CD8-positive, alpha-beta memory T cell (primary cell): ENCODE measurements at regions of chr16 and their contacts with region 1.

Region 1: GRCh38 chr16:81730090-81731051 is 48.7 kb upstream of the PLCG2 start:
- DNase-seq: peak; percentile 42 to 77 (median 53)
- H3K4me3 ChIP-seq: peak overlapping the region; percentile 55
- H3K4me3 Mint-ChIP-seq: peak overlapping the region; percentile 81 to 91 (median 86)
- H3K27ac ChIP-seq: peak overlapping the region; percentile 6
- H3K27ac Mint-ChIP-seq: peak overlapping the region; percentile 70 to 96 (median 88)
- H3K4me1 ChIP-seq: peaks cover 15% of the 10 kb centered on the region
- H3K4me1 Mint-ChIP-seq: peaks cover 13 to 17% (median 16%) of the 10 kb centered on the region in 3 donors
- H3K27me3 ChIP-seq: no peaks in the 10 kb centered on the region
- H3K27me3 Mint-ChIP-seq: peaks cover 0 to 4% of the 10 kb centered on the region in 2 donors

Region 2: GRCh38 chr16:81623363-81624102 is 106.8 kb before region 1 on chr16:
- CTCF ChIA-PET with region 1: interaction called, 33 read pairs
- POLR2A ChIA-PET with region 1: no interaction called
- DNase-seq: peak; percentile 24 to 70 (median 35)
- H3K4me3 ChIP-seq: no peak overlapping the region
- H3K4me3 Mint-ChIP-seq: no peak overlapping the region
- H3K27ac ChIP-seq: no peak overlapping the region
- H3K27ac Mint-ChIP-seq: peak overlapping the region in 6 of 8 donors; percentile 27 to 80 (median 62)
- H3K4me1 ChIP-seq: peaks cover 12% of the 10 kb centered on the region
- H3K4me1 Mint-ChIP-seq: peaks cover 5 to 19% (median 6%) of the 10 kb centered on the region in 3 donors
- H3K27me3 ChIP-seq: no peaks in the 10 kb centered on the region
- H3K27me3 Mint-ChIP-seq: no peaks in the 10 kb centered on the region

Region 3: GRCh38 chr16:81703177-81704155 is 26.9 kb before region 1 on chr16:
- CTCF ChIA-PET with region 1: no interaction called
- POLR2A ChIA-PET with region 1: no interaction called
- DNase-seq: peak in 1 of 5 donors; percentile 39
- H3K4me3 ChIP-seq: no peak overlapping the region
- H3K4me3 Mint-ChIP-seq: no peak overlapping the region
- H3K27ac ChIP-seq: no peak overlapping the region
- H3K27ac Mint-ChIP-seq: peak overlapping the region; percentile 3 to 80 (median 48)
- H3K4me1 ChIP-seq: no peaks in the 10 kb centered on the region
- H3K4me1 Mint-ChIP-seq: peaks cover 4 to 12% (median 9%) of the 10 kb centered on the region in 3 donors
- H3K27me3 ChIP-seq: no peaks in the 10 kb centered on the region
- H3K27me3 Mint-ChIP-seq: peaks cover 0 to 2% of the 10 kb centered on the region in 2 donors

Region 4: GRCh38 chr16:81715358-81716196 is 14.8 kb before region 1 on chr16:
- CTCF ChIA-PET with region 1: interaction called, 17 read pairs
- POLR2A ChIA-PET with region 1: interaction called, 3 read pairs
- DNase-seq: peak in 4 of 5 donors; percentile 12 to 69 (median 61)
- H3K4me3 ChIP-seq: peak overlapping the region; percentile 7
- H3K4me3 Mint-ChIP-seq: peak overlapping the region; percentile 64 to 87 (median 83)
- H3K27ac ChIP-seq: no peak overlapping the region
- H3K27ac Mint-ChIP-seq: peak overlapping the region; percentile 4 to 95 (median 94)
- H3K4me1 ChIP-seq: peaks cover 42% of the 10 kb centered on the region
- H3K4me1 Mint-ChIP-seq: peaks cover 45 to 56% (median 56%) of the 10 kb centered on the region in 3 donors
- H3K27me3 ChIP-seq: no peaks in the 10 kb centered on the region
- H3K27me3 Mint-ChIP-seq: no peaks in the 10 kb centered on the region

Region 5: DNA sequence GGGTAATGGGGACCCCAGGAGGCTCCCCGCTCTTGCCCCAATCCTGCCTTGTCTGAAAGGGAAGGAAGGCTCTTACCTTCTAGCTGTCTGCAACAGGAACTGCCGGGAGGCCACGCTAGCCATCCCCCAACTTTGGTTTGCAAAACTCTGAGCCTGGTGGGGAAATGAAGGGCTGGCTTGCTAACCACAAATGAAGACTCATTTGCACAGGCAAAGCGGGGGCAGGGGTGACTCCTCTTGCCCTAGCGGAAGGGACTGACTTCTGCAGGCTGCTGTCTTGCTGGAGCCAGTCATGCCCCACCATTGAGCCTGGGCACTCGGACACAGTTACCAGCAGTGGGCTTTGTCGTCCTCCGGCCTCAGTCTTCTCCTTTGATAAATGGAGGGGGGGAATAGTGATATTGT is 101.4 kb after region 1 on chr16:
- CTCF ChIA-PET with region 1: no interaction called
- POLR2A ChIA-PET with region 1: no interaction called
- DNase-seq: peak; percentile 3 to 83 (median 37)
- H3K4me3 ChIP-seq: peak overlapping the region; percentile 13
- H3K4me3 Mint-ChIP-seq: peak overlapping the region; percentile 12 to 90 (median 74)
- H3K27ac ChIP-seq: no peak overlapping the region
- H3K27ac Mint-ChIP-seq: peak overlapping the region; percentile 43 to 98 (median 76)
- H3K4me1 ChIP-seq: peaks cover 25% of the 10 kb centered on the region
- H3K4me1 Mint-ChIP-seq: peaks cover 41 to 73% (median 62%) of the 10 kb centered on the region in 3 donors
- H3K27me3 ChIP-seq: no peaks in the 10 kb centered on the region
- H3K27me3 Mint-ChIP-seq: peaks cover 0 to 1% of the 10 kb centered on the region in 2 donors